ENCODE measurements at regions of chr11 and their contacts with region 1.

Region 1: GRCh38 chr11:120674542-120674941 is 163.0 kb downstream of the GRIK4 start:
- DNase-seq: no peak
- H3K4me3 Mint-ChIP-seq: no peak overlapping the region
- H3K27ac Mint-ChIP-seq: no peak overlapping the region
- H3K4me1 Mint-ChIP-seq: no peaks in the 10 kb centered on the region
- H3K27me3 Mint-ChIP-seq: peaks cover 24% of the 10 kb centered on the region

Region 2: DNA sequence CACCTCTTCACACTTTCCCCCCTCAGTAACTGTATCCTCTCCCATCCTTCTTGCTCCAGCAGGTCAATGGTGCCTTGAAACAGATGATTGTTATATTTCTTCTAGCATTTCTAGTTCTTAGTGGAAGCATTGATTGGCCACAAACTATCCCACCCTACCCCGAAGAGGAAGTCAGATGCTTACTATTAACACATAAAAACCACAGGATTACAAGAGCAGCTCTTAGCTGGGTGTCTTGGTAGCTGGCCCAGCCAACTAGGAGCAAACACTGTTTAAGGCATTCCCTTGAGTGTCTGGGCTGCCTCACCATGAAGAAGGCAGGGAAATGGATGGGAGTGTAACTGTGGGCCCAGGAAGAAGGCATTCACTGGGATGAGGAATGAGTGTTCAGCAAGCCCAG is 13.6 kb after region 1 on chr11:
- CTCF ChIA-PET with region 1: interaction called, 17 read pairs
- POLR2A ChIA-PET with region 1: no interaction called
- intact Hi-C with region 1: no loop called
- DNase-seq: no peak
- H3K4me3 Mint-ChIP-seq: no peak overlapping the region
- H3K27ac Mint-ChIP-seq: no peak overlapping the region
- H3K4me1 Mint-ChIP-seq: no peaks in the 10 kb centered on the region
- H3K27me3 Mint-ChIP-seq: peaks cover 20% of the 10 kb centered on the region

Region 3: GRCh38 chr11:120746836-120747609 is 72.5 kb after region 1 on chr11:
- CTCF ChIA-PET with region 1: no interaction called
- POLR2A ChIA-PET with region 1: no interaction called
- intact Hi-C with region 1: no loop called
- DNase-seq: no peak
- H3K4me3 Mint-ChIP-seq: no peak overlapping the region
- H3K27ac Mint-ChIP-seq: no peak overlapping the region
- H3K4me1 Mint-ChIP-seq: no peaks in the 10 kb centered on the region
- H3K27me3 Mint-ChIP-seq: peaks cover 8% of the 10 kb centered on the region